Activated T-helper 2 cell treated with anti-CD3 and anti-CD28 coated beads, Interferon-gamma antibody, Interleukin-2, Interleukin-4, amounts not matched to agents 10 μg/mL and 5 μg/mL and 100 μg/mL, durations not matched to agents 14 hours and 24 hours and 36 hours (primary cell): ENCODE measurements at regions of chr3 and their contacts with region 1.

Region 1: DNA sequence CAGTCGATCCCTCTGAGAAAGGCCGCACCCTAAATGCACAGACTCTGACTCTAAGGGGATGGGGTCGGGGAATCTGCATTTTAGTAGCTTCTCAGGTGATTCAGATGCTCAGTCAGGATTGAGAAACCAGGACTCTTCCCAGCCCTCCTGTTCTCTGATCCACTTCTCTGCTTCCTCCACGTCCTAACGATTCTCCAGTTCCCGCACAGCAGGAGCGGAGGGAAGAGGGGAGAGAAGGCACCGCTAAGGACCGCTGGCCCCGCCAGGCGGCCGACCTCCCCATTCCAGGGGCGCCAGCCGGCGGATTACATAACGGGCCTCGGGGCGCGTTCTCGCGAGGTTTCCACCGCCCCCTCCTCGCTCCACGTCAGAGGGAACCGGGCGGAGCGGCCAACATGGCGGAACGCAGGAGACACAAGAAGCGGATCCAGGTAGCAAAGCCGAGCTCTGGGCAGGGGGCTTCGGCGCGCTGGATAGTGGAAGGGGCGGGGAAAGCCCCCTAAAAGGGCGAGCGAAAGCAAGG is at the start of gene SEC62:
- DNase-seq: peak; percentile 88
- H3K4me3 Mint-ChIP-seq: peak within 1 kb of the TSS; percentile 91
- H3K27ac Mint-ChIP-seq: peak within 1 kb of the TSS; percentile 99
- H3K4me1 Mint-ChIP-seq: peaks cover 41% of the 10 kb centered on the region
- H3K27me3 Mint-ChIP-seq: peaks cover 5% of the 10 kb centered on the region
- total RNA-seq, gene SEC62: 74.2 and 78.4 TPM in 2 replicates

Region 2: GRCh38 chr3:168865022-168865551 is 1101.4 kb before region 1 on chr3:
- intact Hi-C with region 1: no loop called
- DNase-seq: no peak
- H3K4me3 Mint-ChIP-seq: no peak overlapping the region
- H3K27ac Mint-ChIP-seq: no peak overlapping the region
- H3K4me1 Mint-ChIP-seq: no peaks in the 10 kb centered on the region
- H3K27me3 Mint-ChIP-seq: no peaks in the 10 kb centered on the region

Region 3: GRCh38 chr3:169812332-169813235 is 153.9 kb before region 1 on chr3 and contains the starts of genes LRRC34 and LRRIQ4:
- intact Hi-C with region 1: loop called (anchors 2 kb)
- DNase-seq: peak; percentile 66
- H3K4me3 Mint-ChIP-seq: peak within 1 kb of the TSS; percentile 87
- H3K27ac Mint-ChIP-seq: peak within 1 kb of the TSS; percentile 95
- H3K4me1 Mint-ChIP-seq: peaks cover 37% of the 10 kb centered on the region
- H3K27me3 Mint-ChIP-seq: peaks cover 15% of the 10 kb centered on the region
- total RNA-seq, gene LRRC34: 5.6 and 5.9 TPM in 2 replicates
- total RNA-seq, gene LRRIQ4: 0.16 TPM in 2 replicates

Region 4: GRCh38 chr3:169945313-169945712 is 21.2 kb before region 1 on chr3:
- intact Hi-C with region 1: loop called (anchors 1 kb)
- DNase-seq: peak; percentile 38
- H3K4me3 Mint-ChIP-seq: peak overlapping the region; percentile 35
- H3K27ac Mint-ChIP-seq: peak overlapping the region; percentile 47
- H3K4me1 Mint-ChIP-seq: peaks cover 23% of the 10 kb centered on the region
- H3K27me3 Mint-ChIP-seq: peaks cover 2% of the 10 kb centered on the region

Region 5: DNA sequence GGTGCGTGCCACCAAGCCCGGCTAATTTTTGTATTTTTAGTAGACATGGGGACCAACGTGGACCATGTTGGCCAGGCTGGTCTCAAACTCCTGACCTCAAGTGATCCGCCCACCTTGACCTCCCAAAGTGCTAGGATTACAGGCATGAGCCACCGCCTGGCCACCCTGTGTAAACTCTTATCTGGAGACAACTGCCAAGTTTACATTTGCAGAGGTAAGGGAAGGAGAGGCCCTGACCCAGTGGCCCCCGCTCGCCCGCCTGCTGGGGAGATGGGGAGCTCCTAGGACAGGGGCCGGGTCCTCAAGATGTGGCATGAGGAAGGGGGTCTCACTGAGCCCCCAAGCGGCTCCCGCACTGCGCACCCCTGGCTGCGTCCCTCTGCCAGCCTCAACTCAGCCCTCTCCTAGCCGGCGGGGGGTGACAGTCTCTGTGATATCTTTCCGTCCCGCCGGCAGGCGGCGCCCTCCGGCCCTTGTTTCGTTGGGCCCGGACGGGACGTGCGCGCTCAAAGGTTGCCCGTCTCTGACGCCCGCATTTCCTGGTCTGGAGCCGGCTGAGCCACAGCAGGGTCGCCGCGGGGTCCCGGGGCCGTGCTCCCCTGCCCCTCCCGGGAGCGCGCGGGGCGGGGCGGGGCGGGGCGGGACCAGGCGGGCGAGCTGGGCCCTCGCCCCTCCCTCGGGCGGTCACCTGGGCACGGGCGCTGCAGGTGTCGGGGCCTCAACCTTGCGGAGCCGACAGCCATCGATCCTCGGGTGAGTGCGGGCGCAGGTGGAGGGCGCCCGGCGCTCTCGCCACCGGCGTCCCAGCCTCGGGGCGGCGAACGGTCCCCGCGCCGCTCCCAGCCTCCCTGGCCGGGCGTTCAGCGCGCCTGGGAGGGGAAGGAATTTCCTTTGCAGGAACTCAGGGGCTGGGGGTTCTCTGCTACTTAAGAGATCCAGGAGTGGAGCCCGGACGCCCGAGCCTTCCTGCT is 71.3 kb after region 1 on chr3 and contains the start of gene GPR160:
- intact Hi-C with region 1: loop called (anchors 2 kb)
- DNase-seq: peak; percentile 75
- H3K4me3 Mint-ChIP-seq: peak within 1 kb of the TSS; percentile 84
- H3K27ac Mint-ChIP-seq: peak within 1 kb of the TSS; percentile 33
- H3K4me1 Mint-ChIP-seq: peaks cover 22% of the 10 kb centered on the region
- H3K27me3 Mint-ChIP-seq: no peaks in the 10 kb centered on the region
- total RNA-seq, gene GPR160: 7.7 and 9.6 TPM in 2 replicates

Region 6: GRCh38 chr3:170357176-170357919 is 390.9 kb after region 1 on chr3 and contains the start of gene SKIL:
- intact Hi-C with region 1: loop called (anchors 5 kb)
- DNase-seq: peak; percentile 93
- H3K4me3 Mint-ChIP-seq: peak within 1 kb of the TSS; percentile 95
- H3K27ac Mint-ChIP-seq: peak within 1 kb of the TSS; percentile 97
- H3K4me1 Mint-ChIP-seq: peaks cover 30% of the 10 kb centered on the region
- H3K27me3 Mint-ChIP-seq: peaks cover 8% of the 10 kb centered on the region
- total RNA-seq, gene SKIL: 31.2 and 33.2 TPM in 2 replicates